Activated CD4-positive, alpha-beta T cell treated with anti-CD3 and anti-CD28 coated beads for 36 hours (primary cell): ENCODE measurements at regions of chr13 and their contacts with region 1.

Region 1: GRCh38 chr13:20340759-20341171 is 108.6 kb upstream of the GJB6 start:
- DNase-seq: no peak
- ATAC-seq: no peak
- H3K4me3 Mint-ChIP-seq: no peak overlapping the region
- H3K27ac Mint-ChIP-seq: no peak overlapping the region
- H3K4me1 Mint-ChIP-seq: peaks cover 4% of the 10 kb centered on the region
- H3K27me3 Mint-ChIP-seq: no peaks in the 10 kb centered on the region

Region 2: DNA sequence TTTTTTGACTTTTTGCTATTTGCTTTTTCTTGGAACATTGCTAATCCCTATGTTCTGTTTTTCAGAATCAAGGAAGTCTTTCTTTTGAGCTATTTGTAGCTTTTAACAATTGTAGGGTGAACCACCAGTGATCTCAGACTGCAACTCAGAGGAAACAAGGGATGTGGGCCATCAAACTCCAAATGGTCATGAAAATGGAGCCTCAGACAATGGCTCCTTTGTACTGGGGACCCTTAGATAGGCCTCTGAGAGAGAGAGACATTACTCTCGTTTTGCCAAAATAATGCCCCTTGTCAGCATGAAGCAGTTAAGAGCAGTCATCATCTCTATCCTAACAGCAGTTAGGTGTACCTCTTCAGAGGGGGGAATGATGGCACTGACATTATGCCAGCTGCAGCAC is 52.2 kb before region 1 on chr13:
- CTCF ChIA-PET with region 1: no interaction called
- POLR2A ChIA-PET with region 1: no interaction called
- intact Hi-C with region 1: loop called in 1 of 2 experiments (anchors 10 kb)
- DNase-seq: no peak
- ATAC-seq: no peak
- H3K4me3 Mint-ChIP-seq: no peak overlapping the region
- H3K27ac Mint-ChIP-seq: no peak overlapping the region
- H3K4me1 Mint-ChIP-seq: no peaks in the 10 kb centered on the region
- H3K27me3 Mint-ChIP-seq: no peaks in the 10 kb centered on the region

Region 3: DNA sequence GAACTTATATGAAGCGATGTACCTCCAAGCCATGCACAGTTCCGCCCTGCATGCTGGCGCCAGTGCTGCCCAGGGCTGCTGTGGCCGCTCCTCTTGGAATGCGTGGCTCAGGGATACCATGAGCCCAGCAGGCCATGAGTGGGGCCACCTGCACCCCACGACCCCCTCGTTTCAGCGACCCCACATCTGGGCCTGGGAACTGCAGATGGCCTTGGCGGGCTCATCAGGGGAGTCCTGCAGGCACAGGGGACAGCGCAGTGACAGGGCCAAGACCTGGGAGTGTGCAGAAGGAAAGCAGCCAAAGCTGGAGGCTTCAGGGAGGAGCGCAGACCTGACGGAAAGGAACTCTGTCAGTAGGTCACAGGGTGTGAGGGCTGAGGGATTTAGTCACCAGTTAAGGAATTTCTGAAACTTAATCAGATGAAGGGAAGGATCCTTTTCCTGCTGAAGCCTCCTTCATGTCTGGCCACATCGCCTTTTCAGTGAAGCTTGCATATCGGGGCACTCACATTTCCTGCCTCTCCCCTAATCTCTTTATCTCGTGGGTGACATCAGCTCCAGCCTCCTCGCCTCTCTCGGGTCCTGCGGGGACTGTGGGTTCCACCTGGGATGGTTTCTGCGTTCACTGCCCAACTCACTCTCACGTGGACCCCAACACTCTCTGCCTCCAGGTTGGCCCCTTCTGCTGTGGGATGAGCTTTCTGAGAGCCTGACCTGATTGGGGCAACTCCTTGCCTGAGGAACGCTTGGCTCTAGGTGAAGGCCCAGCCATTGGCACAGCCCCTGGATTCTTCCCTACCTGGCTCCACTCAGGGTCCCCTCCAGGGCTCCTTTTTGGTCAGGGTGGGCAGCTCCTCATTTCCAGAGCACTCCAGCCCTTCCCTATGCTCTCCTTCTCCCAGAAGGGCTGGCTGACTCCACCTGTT is 61.4 kb after region 1 on chr13:
- CTCF ChIA-PET with region 1: no interaction called
- POLR2A ChIA-PET with region 1: no interaction called
- intact Hi-C with region 1: no loop called
- DNase-seq: no peak
- ATAC-seq: no peak
- H3K4me3 Mint-ChIP-seq: no peak overlapping the region
- H3K27ac Mint-ChIP-seq: no peak overlapping the region
- H3K4me1 Mint-ChIP-seq: peaks cover 8% of the 10 kb centered on the region
- H3K27me3 Mint-ChIP-seq: no peaks in the 10 kb centered on the region

Region 4: GRCh38 chr13:20851844-20852402 is 511.2 kb after region 1 on chr13:
- CTCF ChIA-PET with region 1: no interaction called
- POLR2A ChIA-PET with region 1: no interaction called
- intact Hi-C with region 1: no loop called
- DNase-seq: no peak
- ATAC-seq: no peak
- H3K4me3 Mint-ChIP-seq: no peak overlapping the region
- H3K27ac Mint-ChIP-seq: no peak overlapping the region
- H3K4me1 Mint-ChIP-seq: no peaks in the 10 kb centered on the region
- H3K27me3 Mint-ChIP-seq: no peaks in the 10 kb centered on the region